Posterior cingulate gyrus (tissue), 11 donors: ENCODE measurements at regions of chr18 and their contacts with region 1.

Region 1: GRCh38 chr18:59402432-59403090 is 43.5 kb upstream of the LMAN1 start:
- DNase-seq: peak; percentile 49 to 95 (median 76)

Region 2: GRCh38 chr18:59083136-59083818 is 319.3 kb before region 1 on chr18:
- intact Hi-C with region 1: loop called (anchors 5 kb)
- DNase-seq: peak in 2 of 10 donors; percentile 19 to 54

Region 3: GRCh38 chr18:59249205-59249774 is 153.3 kb before region 1 on chr18:
- intact Hi-C with region 1: loop called (anchors 5 kb)
- DNase-seq: peak in 3 of 10 donors; percentile 50 to 67 (median 53)

Region 4: DNA sequence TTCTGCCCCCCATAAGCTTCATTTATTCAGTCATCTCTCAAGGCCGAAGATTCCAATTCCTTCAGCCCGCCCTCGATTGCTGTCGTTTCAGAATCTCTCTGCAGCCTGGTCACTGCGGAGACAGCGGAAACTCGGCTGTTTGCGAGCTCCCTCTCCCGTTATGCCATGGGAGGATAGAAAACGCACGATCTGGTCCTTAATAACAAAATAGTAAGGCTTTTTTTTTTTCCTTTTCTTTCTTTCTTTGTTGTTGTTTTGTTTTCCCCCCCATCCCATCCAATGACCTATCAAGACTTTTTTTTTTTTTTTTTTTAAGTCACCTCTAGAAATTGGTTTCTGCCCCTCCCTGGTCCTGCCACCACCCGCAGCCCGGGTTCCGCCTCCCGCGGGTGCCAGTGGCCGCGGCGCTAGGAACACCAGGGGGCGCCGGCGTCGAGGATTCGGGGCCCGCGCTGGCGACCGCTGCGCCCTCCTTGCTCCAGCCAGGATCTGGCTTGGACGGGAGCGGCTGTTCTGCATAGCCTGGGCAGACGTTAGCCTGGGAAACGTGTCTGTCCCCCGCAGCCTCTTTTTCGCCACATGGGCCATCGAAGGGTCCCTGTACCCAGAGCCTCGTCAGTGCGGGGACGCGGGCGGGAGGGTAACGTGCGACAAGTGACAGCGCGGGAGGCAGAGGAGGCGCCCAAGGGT is 94.2 kb before region 1 on chr18:
- intact Hi-C with region 1: loop called (anchors 5 kb)
- DNase-seq: peak; percentile 20 to 94 (median 68)

Region 5: GRCh38 chr18:59379772-59380522 is 22.6 kb before region 1 on chr18:
- intact Hi-C with region 1: no loop called
- DNase-seq: no peak

Region 6: GRCh38 chr18:59419386-59419785 is 16.8 kb after region 1 on chr18:
- intact Hi-C with region 1: no loop called
- DNase-seq: no peak

Region 7: DNA sequence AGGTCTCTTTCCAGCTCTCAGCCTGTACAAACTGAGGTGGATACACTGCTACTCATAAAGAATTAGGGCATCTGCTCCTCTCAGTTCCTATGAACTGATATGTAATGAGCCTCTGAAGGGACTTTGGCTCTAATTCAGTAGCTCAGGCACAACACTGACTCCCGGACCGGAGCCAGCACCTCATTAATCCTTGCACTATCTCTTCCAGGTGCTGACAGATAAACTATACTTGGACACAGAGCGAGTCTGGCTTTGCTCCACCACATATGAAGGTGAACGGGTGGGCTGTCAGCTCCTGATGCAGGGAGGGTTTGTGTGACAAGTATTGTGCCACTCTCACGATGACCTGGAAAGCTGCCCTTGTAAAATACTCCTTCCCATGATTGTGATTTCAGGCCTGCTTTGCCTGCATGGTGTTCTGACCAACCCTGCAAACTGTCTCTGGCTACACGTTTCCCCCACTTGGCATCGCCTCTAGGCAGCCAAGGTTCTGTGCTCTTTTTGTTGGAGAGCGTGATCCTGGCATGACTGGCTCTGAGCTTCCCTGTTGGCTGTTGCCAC is 68.1 kb after region 1 on chr18:
- intact Hi-C with region 1: no loop called
- DNase-seq: no peak